HCT116 (cell line): ENCODE measurements at regions of chr16 and their contacts with region 1.

Region 1: DNA sequence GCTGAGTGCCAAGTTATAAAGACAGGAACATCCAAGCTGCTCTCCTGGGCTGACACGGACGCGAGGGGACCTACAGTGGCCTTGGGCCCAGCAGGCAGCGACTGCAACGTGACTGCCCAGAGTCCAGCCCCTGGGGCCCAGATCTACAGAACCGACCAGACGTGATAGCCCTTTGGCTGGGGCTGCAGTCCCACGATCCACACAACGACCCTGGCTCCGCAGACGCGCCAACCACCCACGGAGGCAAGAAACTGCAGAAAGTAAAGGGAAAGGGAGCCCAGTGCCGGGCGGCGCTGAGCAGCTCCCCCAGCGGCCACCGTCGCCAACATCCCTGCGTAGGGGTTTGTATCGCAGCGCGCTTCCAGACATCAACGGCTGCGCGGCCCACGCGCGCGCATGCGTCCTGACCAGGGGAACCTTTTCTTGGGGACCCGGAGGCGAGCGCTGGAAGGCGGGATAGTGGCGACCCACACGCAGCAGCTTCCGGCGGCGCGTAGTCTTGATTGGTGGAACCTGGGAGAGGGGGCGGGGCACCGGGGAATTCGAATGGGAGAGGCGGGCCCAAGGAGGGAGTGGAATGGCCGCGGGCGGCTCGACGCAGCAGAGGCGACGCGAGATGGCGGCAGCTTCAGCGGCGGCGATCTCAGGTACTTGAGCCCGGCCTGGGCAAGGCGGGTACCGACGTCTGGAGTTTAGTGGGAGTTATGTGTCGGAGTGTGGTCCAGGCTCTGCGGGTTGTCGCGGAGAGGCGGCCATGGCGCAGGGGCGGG is at the start of gene KIF22:
- DNase-seq: peak; percentile 96
- ATAC-seq: peak; percentile 95
- H3K4me3 ChIP-seq: peak within 1 kb of the TSS; percentile 90 to 99
- H3K27ac ChIP-seq: peak within 1 kb of the TSS; percentile 80
- H3K4me1 ChIP-seq: peaks cover 13 to 21% of the 10 kb centered on the region in 2 experiments
- H3K27me3 ChIP-seq: no peaks in the 10 kb centered on the region
- CTCF ChIP-seq: peak; percentile 13 to 66 (median 62); a peak in 5 of 6 replicates
- POLR2A ChIP-seq: peak; percentile 77
- RAD21 ChIP-seq: 0 out of 2 replicates have a peak, but pooled peaks have one; percentile 14
- total RNA-seq, gene KIF22: 155 TPM

Region 2: DNA sequence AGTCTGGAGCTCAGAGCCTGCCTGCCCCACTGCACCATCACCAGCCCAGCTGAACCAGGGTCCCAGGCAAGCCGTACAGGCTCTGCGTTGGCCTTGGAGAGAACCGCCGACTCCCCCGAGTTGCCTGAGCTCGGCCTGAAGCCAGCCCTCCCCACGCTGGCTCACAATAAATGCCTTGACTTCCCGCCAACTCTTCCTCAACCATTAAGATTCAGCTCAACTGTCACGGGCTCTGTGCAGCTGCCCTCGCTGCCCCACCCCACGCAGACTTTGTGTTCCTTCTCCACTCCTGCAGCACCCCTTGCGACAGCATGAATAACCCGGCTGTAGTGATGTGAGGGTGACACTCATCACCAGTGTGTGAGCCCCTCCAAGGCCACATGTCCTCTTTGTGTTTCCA is 116.2 kb before region 1 on chr16:
- CTCF ChIA-PET with region 1: no interaction called
- POLR2A ChIA-PET with region 1: no interaction called
- RAD21 ChIA-PET with region 1: no interaction called
- intact Hi-C with region 1: no loop called
- DNase-seq: no peak
- ATAC-seq: no peak
- H3K4me3 ChIP-seq: no peak overlapping the region
- H3K27ac ChIP-seq: no peak overlapping the region
- H3K4me1 ChIP-seq: peaks cover 0 to 5% of the 10 kb centered on the region in 2 experiments; a peak in 2 of 4 replicates
- H3K27me3 ChIP-seq: no peaks in the 10 kb centered on the region
- CTCF ChIP-seq: no peak
- POLR2A ChIP-seq: no peak
- RAD21 ChIP-seq: no peak

Region 3: GRCh38 chr16:29805378-29806098 is 15.2 kb after region 1 on chr16:
- CTCF ChIA-PET with region 1: interaction called, 14 read pairs
- POLR2A ChIA-PET with region 1: interaction called, 10 read pairs
- RAD21 ChIA-PET with region 1: interaction called in 1 of 2 experiments, 3 read pairs
- intact Hi-C with region 1: loop called (anchors 2 kb)
- DNase-seq: peak; percentile 93
- ATAC-seq: peak; percentile 56
- H3K4me3 ChIP-seq: peak overlapping the region; percentile 67 to 70
- H3K27ac ChIP-seq: peak overlapping the region; percentile 85
- H3K4me1 ChIP-seq: peaks cover 27 to 55% of the 10 kb centered on the region in 2 experiments
- H3K27me3 ChIP-seq: no peaks in the 10 kb centered on the region
- CTCF ChIP-seq: no peak
- POLR2A ChIP-seq: peak; percentile 75
- RAD21 ChIP-seq: no peak